ENCODE measurements at regions of chr14 and their contacts with region 1.

Region 1: GRCh38 chr14:44961604-44962333 is at the starts of genes KLHL28 and TOGARAM1:
- DNase-seq: peak; percentile 97
- H3K4me3 Mint-ChIP-seq: no peak within 1 kb of the TSS
- H3K27ac Mint-ChIP-seq: no peak within 1 kb of the TSS
- H3K4me1 Mint-ChIP-seq: peaks cover 54% of the 10 kb centered on the region
- H3K27me3 Mint-ChIP-seq: no peaks in the 10 kb centered on the region
- total RNA-seq, gene KLHL28: 11.0 to 11.8 TPM
- total RNA-seq, gene TOGARAM1: 4.5 to 5.4 TPM

Region 2: GRCh38 chr14:44897045-44897844 is 64.5 kb before region 1 on chr14:
- CTCF ChIA-PET with region 1: interaction called, 4 read pairs
- POLR2A ChIA-PET with region 1: interaction called, 17 read pairs
- intact Hi-C with region 1: loop called (anchors 1 kb)
- DNase-seq: peak; percentile 99
- H3K4me3 Mint-ChIP-seq: peak overlapping the region; percentile 87
- H3K27ac Mint-ChIP-seq: peak overlapping the region; percentile 83
- H3K4me1 Mint-ChIP-seq: peaks cover 14% of the 10 kb centered on the region
- H3K27me3 Mint-ChIP-seq: no peaks in the 10 kb centered on the region

Region 3: GRCh38 chr14:44928793-44929192 is 33.0 kb before region 1 on chr14:
- CTCF ChIA-PET with region 1: no interaction called
- POLR2A ChIA-PET with region 1: interaction called, 3 read pairs
- intact Hi-C with region 1: loop called (anchors 2 kb)
- DNase-seq: no peak
- H3K4me3 Mint-ChIP-seq: no peak overlapping the region
- H3K27ac Mint-ChIP-seq: peak overlapping the region; percentile 51
- H3K4me1 Mint-ChIP-seq: peaks cover 5% of the 10 kb centered on the region
- H3K27me3 Mint-ChIP-seq: no peaks in the 10 kb centered on the region

Region 4: DNA sequence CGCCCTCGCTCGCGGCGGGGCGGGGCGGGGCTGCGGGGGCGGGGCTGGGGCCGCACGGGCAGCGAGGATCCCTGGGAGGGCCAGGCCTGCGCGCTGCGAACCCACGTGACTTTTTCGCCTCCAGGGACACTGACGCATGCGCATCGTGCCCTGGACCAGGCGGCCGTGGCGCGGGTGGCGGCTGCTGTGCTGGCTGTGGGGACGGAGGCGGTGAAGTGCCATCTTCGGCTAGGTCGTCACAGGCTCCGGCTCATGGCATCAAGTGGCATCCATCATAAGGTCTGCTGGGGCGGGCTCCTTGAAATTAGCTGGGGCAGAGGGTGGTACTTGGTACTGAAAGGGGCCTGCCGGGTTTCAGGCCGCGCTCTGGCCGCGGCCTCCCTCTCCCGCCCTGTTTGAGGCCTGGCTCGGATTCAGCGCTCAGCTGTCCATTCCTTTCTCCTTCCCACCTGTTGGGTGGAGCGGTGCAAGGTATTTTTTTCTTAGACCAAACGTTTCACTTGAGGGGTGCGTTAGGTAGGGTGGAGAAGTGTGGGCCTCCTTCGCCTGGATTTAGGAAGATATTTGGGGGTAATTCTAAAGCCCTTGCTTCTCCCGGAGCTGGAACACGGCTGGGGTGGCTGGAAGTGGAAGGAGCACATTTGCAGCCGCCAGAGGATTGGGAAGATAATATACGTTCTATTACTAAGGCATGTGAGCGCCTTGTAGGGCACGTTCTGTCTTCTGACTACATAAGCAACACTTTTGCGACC is 122.4 kb after region 1 on chr14 and contains the start of gene PRPF39:
- CTCF ChIA-PET with region 1: no interaction called
- POLR2A ChIA-PET with region 1: interaction called, 16 read pairs
- intact Hi-C with region 1: loop called (anchors 1 kb)
- DNase-seq: peak; percentile 97
- H3K4me3 Mint-ChIP-seq: peak within 1 kb of the TSS; percentile 95
- H3K27ac Mint-ChIP-seq: peak within 1 kb of the TSS; percentile 95
- H3K4me1 Mint-ChIP-seq: peaks cover 41% of the 10 kb centered on the region
- H3K27me3 Mint-ChIP-seq: no peaks in the 10 kb centered on the region
- total RNA-seq, gene PRPF39: 38.9 to 40.9 TPM